HEK293T (cell line): ENCODE measurements at regions of chr12 and their contacts with region 1.

Region 1: DNA sequence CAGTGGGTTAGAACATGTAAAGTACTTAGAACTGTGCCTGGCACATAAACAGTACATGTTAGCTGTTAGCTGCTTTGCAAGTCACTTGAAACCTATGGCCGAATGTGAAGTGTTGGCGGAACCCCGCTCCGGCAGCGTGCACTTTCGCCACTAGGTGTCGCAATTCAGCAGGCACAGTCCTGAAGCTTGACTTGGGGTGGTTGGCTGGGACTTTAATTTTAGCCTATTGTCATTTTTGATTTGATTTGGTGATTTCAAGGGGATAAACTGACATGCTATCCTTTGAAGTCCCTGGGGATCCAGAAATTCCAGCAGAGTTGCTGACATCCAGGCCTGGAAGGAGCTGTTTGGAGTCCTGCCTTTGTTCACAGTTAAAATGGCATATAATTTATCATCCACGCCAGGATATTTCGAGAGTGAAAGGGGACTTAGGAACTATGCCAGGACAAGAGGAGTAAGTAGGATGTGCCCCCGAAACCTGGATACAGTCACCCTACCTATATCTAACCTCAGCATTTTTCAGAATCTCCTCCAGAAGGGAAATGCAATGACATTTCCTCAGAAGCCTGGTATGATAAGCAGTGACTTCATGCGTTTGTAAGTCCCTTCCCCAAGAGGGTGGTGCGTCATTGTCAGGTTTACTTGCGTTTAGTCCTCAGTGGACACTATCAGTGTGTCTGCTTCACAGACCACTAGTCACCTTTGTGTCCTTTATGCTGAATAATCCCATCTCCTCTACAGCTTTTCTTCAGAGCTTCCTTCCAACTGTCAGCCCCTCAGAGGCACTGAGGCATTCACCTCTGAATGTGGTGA is 3.5 kb upstream of the TSPAN9 start:
- DNase-seq: peak; percentile 88

Region 2: GRCh38 chr12:3014641-3015040 is 59.0 kb before region 1 on chr12:
- CTCF ChIA-PET with region 1: no interaction called
- POLR2A ChIA-PET with region 1: no interaction called
- DNase-seq: no peak

Region 3: DNA sequence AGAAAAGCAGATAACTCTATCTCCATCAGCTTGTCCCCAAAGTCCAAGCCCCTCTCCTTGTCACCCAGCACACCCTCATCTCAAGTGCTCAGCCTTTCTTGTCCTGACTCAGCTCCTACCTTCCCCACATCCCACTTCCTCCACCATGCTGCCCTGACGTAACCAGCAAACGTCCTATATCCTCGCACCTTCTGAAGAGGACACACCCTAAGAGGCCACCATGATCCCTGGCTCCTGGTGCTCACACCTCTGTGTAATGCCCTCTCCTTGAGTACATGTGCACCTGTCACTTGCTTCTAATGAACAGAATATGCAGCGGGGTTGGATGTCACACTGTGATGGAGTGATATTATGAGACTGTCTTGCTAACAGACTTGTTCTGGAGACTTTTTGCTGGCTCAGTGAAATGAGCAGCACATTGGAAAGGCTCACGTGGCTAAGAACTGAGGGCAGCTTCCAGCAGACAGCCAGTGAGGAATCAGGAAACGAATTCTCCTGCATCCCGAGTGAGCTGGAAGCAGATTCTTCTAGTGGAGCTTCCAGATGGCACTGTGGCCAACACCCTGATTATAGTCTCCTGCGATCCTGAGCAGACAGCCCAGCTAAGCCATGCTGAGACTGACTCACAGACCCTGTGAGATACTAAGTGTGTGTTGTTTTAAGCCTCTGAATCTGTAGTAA is 12.7 kb before region 1 on chr12:
- CTCF ChIA-PET with region 1: interaction called, 14 read pairs
- POLR2A ChIA-PET with region 1: no interaction called
- DNase-seq: no peak